B cell (primary cell): ENCODE measurements at regions of chr15 and their contacts with region 1.

Region 1: DNA sequence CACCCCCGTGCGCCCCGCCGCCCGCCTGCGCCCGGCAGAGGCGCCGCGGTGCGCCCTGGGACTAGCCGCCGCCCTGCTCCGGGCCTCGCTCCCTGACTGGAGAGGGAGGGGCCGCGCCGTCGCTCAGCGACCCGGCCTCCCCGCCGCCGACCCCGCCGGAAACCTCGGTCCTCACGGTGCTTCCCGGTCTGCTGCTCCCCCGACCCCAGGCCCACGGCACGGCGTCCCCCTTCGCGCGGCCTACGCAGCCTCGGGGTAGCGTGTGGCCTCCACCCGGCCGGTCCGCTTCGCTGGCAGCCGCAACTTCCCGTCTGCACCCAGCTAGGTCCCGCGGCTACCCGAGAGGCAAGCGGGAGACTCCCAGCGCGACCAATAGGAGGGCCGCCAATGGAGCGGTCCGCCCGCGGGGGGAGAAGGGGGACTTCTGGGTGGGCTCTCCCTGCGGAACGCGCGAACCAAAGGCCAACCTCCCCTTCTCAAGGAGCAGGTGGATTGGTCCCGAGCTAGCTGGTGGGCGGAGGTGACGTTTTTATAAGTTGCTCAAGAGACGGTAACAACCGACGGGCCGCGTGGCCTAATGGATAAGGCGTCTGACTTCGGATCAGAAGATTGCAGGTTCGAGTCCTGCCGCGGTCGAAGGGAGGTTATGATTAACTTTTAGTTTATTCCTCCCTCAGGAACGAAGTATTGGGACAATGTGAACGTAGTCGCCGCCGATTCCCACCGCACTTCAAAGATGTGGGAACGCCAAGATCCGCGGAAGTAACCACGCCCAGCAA is at the start of gene POLG:
- DNase-seq: peak; percentile 100
- ATAC-seq: peak; percentile 92
- H3K4me3 ChIP-seq: peak within 1 kb of the TSS; percentile 58 to 92 (median 82)
- H3K4me3 Mint-ChIP-seq: peak within 1 kb of the TSS; percentile 97
- H3K27ac ChIP-seq: peak within 1 kb of the TSS; percentile 55 to 90
- H3K27ac Mint-ChIP-seq: peak within 1 kb of the TSS; percentile 99
- H3K4me1 ChIP-seq: peaks cover 26 to 54% of the 10 kb centered on the region in 2 donors
- H3K4me1 Mint-ChIP-seq: peaks cover 47% of the 10 kb centered on the region
- H3K27me3 ChIP-seq: no peaks in the 10 kb centered on the region
- H3K27me3 Mint-ChIP-seq: peaks cover 4% of the 10 kb centered on the region
- CTCF ChIP-seq: no peak
- total RNA-seq, gene POLG: 144 and 151 TPM in 2 replicates

Region 2: GRCh38 chr15:89320200-89320599 is 14.5 kb before region 1 on chr15:
- CTCF ChIA-PET with region 1: interaction called, 3 read pairs
- POLR2A ChIA-PET with region 1: interaction called, 11 read pairs
- intact Hi-C with region 1: no loop called
- DNase-seq: no peak
- ATAC-seq: no peak
- H3K4me3 ChIP-seq: no peak overlapping the region
- H3K4me3 Mint-ChIP-seq: no peak overlapping the region
- H3K27ac ChIP-seq: no peak overlapping the region
- H3K27ac Mint-ChIP-seq: no peak overlapping the region
- H3K4me1 ChIP-seq: no peaks in the 10 kb centered on the region
- H3K4me1 Mint-ChIP-seq: no peaks in the 10 kb centered on the region
- H3K27me3 ChIP-seq: no peaks in the 10 kb centered on the region
- H3K27me3 Mint-ChIP-seq: no peaks in the 10 kb centered on the region
- CTCF ChIP-seq: no peak

Region 3: GRCh38 chr15:89500397-89501270 is 165.9 kb after region 1 on chr15:
- CTCF ChIA-PET with region 1: no interaction called
- POLR2A ChIA-PET with region 1: no interaction called
- intact Hi-C with region 1: no loop called
- DNase-seq: no peak
- ATAC-seq: no peak
- H3K4me3 ChIP-seq: no peak overlapping the region
- H3K4me3 Mint-ChIP-seq: no peak overlapping the region
- H3K27ac ChIP-seq: no peak overlapping the region
- H3K27ac Mint-ChIP-seq: no peak overlapping the region
- H3K4me1 ChIP-seq: peaks cover 7 to 13% of the 10 kb centered on the region in 2 donors
- H3K4me1 Mint-ChIP-seq: peaks cover 6% of the 10 kb centered on the region
- H3K27me3 ChIP-seq: peaks cover 0 to 27% (median 17%) of the 10 kb centered on the region in 4 experiments
- H3K27me3 Mint-ChIP-seq: peaks cover 66% of the 10 kb centered on the region
- CTCF ChIP-seq: no peak

Region 4: DNA sequence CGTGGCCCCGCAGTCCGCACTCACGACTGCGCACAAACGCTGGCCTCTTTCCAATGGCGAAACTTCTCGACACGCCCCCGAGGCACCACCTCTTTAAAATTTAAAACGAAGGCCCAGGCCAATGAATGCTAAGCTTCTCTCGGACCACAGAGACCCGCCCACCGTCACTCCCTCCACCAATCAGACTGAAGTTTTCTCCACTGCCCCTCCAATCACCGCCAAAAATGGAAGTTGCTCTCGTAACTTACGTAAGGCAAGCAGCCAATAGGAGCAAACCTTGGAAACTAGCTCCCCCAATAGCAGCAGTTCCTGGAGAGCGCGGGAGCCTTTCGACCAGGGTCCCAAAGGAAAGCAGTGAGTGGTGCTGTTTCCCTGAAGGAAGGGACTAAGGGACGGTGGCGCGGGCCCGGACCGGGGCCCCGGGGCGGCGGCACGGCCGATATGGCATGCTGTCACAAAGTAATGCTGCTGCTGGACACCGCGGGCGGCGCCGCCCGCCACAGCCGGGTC is 240.5 kb after region 1 on chr15 and contains the start of gene TICRR:
- CTCF ChIA-PET with region 1: no interaction called
- POLR2A ChIA-PET with region 1: no interaction called
- intact Hi-C with region 1: loop called (anchors 1 kb)
- DNase-seq: peak; percentile 98
- ATAC-seq: peak; percentile 97
- H3K4me3 ChIP-seq: peak within 1 kb of the TSS; percentile 69 to 91 (median 86)
- H3K4me3 Mint-ChIP-seq: peak within 1 kb of the TSS; percentile 82
- H3K27ac ChIP-seq: no peak within 1 kb of the TSS
- H3K27ac Mint-ChIP-seq: peak within 1 kb of the TSS; percentile 57
- H3K4me1 ChIP-seq: peaks cover 6 to 15% of the 10 kb centered on the region in 2 donors
- H3K4me1 Mint-ChIP-seq: peaks cover 11% of the 10 kb centered on the region
- H3K27me3 ChIP-seq: peaks cover 0 to 5% (median 0%) of the 10 kb centered on the region in 4 experiments
- H3K27me3 Mint-ChIP-seq: peaks cover 16% of the 10 kb centered on the region
- CTCF ChIP-seq: no peak
- total RNA-seq, gene TICRR: 0.05 TPM in 1 of 2 replicates, not detected in the other